Caco-2 (cell line): ENCODE measurements at regions of chr13 and their contacts with region 1.

Region 1: GRCh38 chr13:109667056-109667455 is 119.3 kb downstream of the IRS2 start:
- DNase-seq: no peak
- H3K4me3 ChIP-seq: no peak overlapping the region
- H3K4me3 Mint-ChIP-seq: no peak overlapping the region
- H3K27ac Mint-ChIP-seq: no peak overlapping the region
- H3K4me1 ChIP-seq: no peaks in the 10 kb centered on the region
- H3K4me1 Mint-ChIP-seq: no peaks in the 10 kb centered on the region
- H3K27me3 ChIP-seq: no peaks in the 10 kb centered on the region
- H3K27me3 Mint-ChIP-seq: no peaks in the 10 kb centered on the region
- CTCF ChIP-seq: no peak

Region 2: GRCh38 chr13:109567315-109567714 is 99.7 kb before region 1 on chr13:
- CTCF ChIA-PET with region 1: no interaction called
- POLR2A ChIA-PET with region 1: no interaction called
- intact Hi-C with region 1: loop called (anchors 5 kb)
- DNase-seq: no peak
- H3K4me3 ChIP-seq: no peak overlapping the region
- H3K4me3 Mint-ChIP-seq: no peak overlapping the region
- H3K27ac Mint-ChIP-seq: no peak overlapping the region
- H3K4me1 ChIP-seq: 0 out of 2 replicates have a peak, but pooled peaks cover 6% of the 10 kb centered on the region
- H3K4me1 Mint-ChIP-seq: peaks cover 7% of the 10 kb centered on the region
- H3K27me3 ChIP-seq: no peaks in the 10 kb centered on the region
- H3K27me3 Mint-ChIP-seq: no peaks in the 10 kb centered on the region
- CTCF ChIP-seq: no peak

Region 3: DNA sequence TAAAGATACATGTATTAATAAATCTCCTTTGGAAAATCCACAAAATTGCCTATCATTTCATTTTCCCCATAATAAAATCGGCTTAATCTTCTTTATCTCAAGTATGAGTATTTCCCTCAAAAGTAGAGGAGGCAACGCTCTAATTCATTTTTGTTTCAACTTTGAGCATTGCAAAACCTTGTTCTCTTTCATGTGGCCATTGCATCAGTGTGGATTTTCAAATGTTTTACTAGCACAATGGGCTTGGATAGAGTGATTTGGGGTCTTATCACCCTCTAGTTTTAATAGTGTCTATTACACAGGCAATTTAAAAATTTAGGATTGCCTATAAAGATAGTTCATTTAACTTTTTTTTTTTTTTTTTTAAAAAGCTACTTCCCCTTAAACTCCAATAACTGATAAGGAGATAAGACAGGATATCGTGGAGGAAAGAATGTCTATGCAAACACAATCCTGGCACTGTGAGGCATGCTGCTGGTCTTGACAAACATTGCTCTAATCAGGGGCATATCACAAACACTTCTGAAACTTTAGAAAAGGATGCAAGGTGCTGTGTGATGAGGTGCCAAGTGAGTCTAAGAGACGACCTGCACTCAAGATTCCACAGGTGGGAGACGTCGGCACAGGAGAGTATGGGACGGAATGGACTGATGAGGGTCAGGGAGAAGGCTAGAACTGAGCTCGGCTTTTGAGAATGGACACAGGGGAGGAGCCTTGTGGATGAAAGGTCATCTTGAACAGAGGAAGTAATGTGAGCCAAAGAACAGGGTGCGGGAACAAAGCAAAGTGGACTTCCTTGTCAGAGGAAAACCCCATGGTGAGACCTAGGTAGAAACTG is 80.3 kb before region 1 on chr13:
- CTCF ChIA-PET with region 1: no interaction called
- POLR2A ChIA-PET with region 1: no interaction called
- intact Hi-C with region 1: no loop called
- DNase-seq: peak; percentile 77 to 90
- H3K4me3 ChIP-seq: 0 out of 2 replicates have a peak overlapping the region, but pooled peaks have one; percentile 8
- H3K4me3 Mint-ChIP-seq: peak overlapping the region; percentile 64
- H3K27ac Mint-ChIP-seq: peak overlapping the region; percentile 77
- H3K4me1 ChIP-seq: peaks cover 30% of the 10 kb centered on the region
- H3K4me1 Mint-ChIP-seq: peaks cover 34% of the 10 kb centered on the region
- H3K27me3 ChIP-seq: no peaks in the 10 kb centered on the region
- H3K27me3 Mint-ChIP-seq: no peaks in the 10 kb centered on the region
- CTCF ChIP-seq: peak in 1 of 2 experiments; percentile 3

Region 4: GRCh38 chr13:109840201-109840892 is 173.3 kb after region 1 on chr13:
- CTCF ChIA-PET with region 1: no interaction called
- POLR2A ChIA-PET with region 1: no interaction called
- intact Hi-C with region 1: no loop called
- DNase-seq: no peak
- H3K4me3 ChIP-seq: no peak overlapping the region
- H3K4me3 Mint-ChIP-seq: no peak overlapping the region
- H3K27ac Mint-ChIP-seq: no peak overlapping the region
- H3K4me1 ChIP-seq: peaks cover 3% of the 10 kb centered on the region
- H3K4me1 Mint-ChIP-seq: no peaks in the 10 kb centered on the region
- H3K27me3 ChIP-seq: no peaks in the 10 kb centered on the region
- H3K27me3 Mint-ChIP-seq: peaks cover 4% of the 10 kb centered on the region
- CTCF ChIP-seq: no peak